Activated CD8-positive, alpha-beta T cell treated with anti-CD3 and anti-CD28 coated beads, Interleukin-2, amount 10 ng/mL, durations not matched to agents 7 days and 5 days (primary cell): ENCODE measurements at regions of chr10 and their contacts with region 1.

Region 1: DNA sequence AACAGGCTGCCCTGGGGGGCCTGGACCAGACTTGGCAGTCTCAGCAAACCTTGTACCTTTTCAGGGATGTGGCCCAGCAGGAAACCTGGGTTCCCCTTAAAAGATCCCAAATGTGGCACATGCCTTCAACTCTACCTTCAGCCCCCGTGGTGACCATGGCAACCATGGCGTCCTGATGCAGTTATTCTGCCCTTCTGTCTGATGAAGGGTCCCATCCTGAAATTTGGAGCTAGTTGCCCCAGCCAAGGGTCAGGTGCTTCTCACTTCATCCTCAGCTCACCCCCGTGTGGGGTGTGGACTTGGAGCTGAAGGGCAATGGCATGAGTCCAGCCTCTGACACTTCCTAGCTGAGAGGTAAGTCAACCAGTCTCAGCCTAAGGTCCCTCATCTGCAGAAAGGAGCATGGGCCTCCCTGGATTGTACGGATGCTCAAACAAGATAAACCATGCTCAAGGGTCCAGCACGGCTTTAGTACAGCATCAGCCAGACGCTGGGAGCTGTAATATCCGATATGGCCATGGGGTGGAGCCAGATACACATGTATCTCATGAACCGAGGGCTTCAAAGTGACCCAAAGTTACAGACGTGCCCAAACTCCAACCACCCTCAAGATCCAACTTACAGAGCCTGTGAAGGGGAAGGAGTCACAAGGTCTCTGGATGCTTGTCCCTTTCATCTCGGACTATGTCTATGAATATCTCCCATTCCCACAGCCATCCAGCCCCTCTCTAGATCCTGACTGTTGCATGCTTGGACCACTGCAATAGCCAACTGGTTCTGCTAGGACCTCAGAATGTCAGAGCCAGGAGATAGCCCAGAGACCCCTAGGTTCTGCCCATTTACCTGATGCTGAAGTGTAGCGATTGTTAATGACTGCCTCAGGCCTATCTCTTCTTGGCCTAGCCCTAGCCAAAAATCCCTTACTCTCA is 142.5 kb downstream of the SH3PXD2A start:
- DNase-seq: peak; percentile 88
- ATAC-seq: peak; percentile 86
- H3K4me3 Mint-ChIP-seq: no peak overlapping the region
- H3K27ac Mint-ChIP-seq: no peak overlapping the region
- H3K4me1 Mint-ChIP-seq: peaks cover 5% of the 10 kb centered on the region
- H3K27me3 Mint-ChIP-seq: peaks cover 3% of the 10 kb centered on the region

Region 2: GRCh38 chr10:103659674-103660363 is 53.0 kb before region 1 on chr10:
- CTCF ChIA-PET with region 1: no interaction called
- POLR2A ChIA-PET with region 1: no interaction called
- DNase-seq: peak; percentile 81
- ATAC-seq: peak; percentile 93
- H3K4me3 Mint-ChIP-seq: peak overlapping the region; percentile 89
- H3K27ac Mint-ChIP-seq: peak overlapping the region; percentile 89
- H3K4me1 Mint-ChIP-seq: peaks cover 19% of the 10 kb centered on the region
- H3K27me3 Mint-ChIP-seq: no peaks in the 10 kb centered on the region

Region 3: DNA sequence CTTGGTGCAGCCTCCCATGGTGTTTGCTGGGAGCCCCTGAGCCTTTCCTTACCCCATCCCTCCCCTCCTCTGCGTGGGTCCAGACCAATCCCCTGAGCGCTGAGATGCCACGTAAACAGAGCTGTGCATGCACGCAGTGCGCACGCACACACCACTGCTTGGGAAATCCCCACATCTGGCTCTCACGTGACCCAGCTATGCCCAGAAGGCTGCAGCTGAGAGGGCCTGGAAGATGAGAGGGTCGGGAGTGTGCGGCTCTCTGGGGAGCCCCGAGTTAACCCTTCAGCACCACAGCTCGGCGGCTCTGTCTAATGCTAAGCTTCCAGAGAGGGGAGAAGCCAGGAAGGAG is 34.7 kb before region 1 on chr10:
- CTCF ChIA-PET with region 1: no interaction called
- POLR2A ChIA-PET with region 1: no interaction called
- DNase-seq: peak; percentile 85
- ATAC-seq: peak; percentile 97
- H3K4me3 Mint-ChIP-seq: peak overlapping the region; percentile 75
- H3K27ac Mint-ChIP-seq: peak overlapping the region; percentile 88
- H3K4me1 Mint-ChIP-seq: peaks cover 13% of the 10 kb centered on the region
- H3K27me3 Mint-ChIP-seq: no peaks in the 10 kb centered on the region

Region 4: DNA sequence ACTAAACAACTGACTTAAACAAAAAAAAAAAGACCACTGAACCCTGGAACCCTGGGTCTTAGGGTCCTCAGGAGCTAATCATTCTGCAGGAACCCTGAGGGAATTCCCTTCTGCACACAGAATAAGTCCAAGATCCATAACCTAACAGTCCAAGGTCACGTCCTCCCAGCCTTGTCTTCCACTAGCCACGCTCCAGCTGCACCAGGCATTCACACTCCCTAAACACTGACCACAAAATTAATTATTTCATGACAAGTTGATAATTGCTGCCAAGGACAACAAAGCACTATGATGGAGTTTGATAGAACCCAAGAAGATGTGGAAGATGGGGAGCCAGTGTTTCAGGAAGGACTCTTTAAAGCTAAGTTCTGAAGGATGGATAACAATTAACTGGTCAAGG is 11.9 kb after region 1 on chr10:
- CTCF ChIA-PET with region 1: interaction called, 15 read pairs
- POLR2A ChIA-PET with region 1: no interaction called
- DNase-seq: no peak
- ATAC-seq: no peak
- H3K4me3 Mint-ChIP-seq: no peak overlapping the region
- H3K27ac Mint-ChIP-seq: no peak overlapping the region
- H3K4me1 Mint-ChIP-seq: no peaks in the 10 kb centered on the region
- H3K27me3 Mint-ChIP-seq: peaks cover 7% of the 10 kb centered on the region

Region 5: GRCh38 chr10:103845972-103846371 is 133.1 kb after region 1 on chr10:
- CTCF ChIA-PET with region 1: interaction called, 91 read pairs
- POLR2A ChIA-PET with region 1: interaction called, 3 read pairs
- DNase-seq: peak; percentile 62
- ATAC-seq: peak; percentile 88
- H3K4me3 Mint-ChIP-seq: peak overlapping the region; percentile 28
- H3K27ac Mint-ChIP-seq: peak overlapping the region; percentile 72
- H3K4me1 Mint-ChIP-seq: peaks cover 23% of the 10 kb centered on the region
- H3K27me3 Mint-ChIP-seq: peaks cover 15% of the 10 kb centered on the region

Region 6: DNA sequence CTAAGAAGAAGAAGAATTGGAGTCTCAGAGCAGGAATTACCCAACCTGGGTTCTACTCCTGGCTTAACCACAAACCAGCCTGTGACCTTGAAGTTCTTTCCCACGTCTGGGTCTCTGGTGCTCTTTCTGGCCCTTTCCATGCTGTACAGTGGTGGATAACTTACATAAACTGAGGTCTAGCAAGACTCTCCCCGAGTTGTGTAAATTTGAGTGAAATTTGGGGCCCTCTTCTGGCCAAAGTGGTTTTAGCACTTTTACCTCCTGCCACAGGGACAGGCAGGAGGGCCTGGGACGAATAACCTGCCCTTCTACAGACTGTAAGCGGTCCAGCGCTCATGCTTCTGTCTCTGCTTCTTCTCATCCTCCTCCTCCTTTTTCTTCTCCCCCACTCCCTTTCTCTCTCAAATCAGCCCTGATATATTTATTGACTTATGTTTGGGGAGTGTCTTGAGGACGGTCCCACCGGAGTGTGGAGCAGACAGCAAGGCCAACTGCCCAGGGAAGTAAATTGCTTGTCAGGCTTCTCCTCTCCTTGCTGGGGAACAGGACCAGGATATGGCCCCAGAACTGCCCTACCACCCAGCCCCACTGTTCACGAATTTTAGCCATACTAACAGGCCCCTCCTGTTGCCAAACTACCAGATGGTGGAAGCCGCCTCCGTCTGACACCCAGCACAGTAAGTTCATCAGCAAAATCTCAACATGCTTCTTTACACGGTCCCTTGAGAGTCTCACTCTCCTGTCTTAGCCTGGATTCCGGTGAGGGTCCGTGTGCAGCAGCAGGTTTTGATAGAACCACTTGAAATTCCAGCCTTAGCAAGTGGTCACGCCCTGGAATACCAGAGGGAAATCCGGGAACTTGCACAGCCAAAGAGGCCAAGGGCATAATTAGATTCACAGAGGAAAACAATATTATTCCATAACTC is 146.6 kb after region 1 on chr10:
- CTCF ChIA-PET with region 1: interaction called, 91 read pairs
- POLR2A ChIA-PET with region 1: no interaction called
- DNase-seq: peak; percentile 76
- ATAC-seq: peak; percentile 67
- H3K4me3 Mint-ChIP-seq: no peak overlapping the region
- H3K27ac Mint-ChIP-seq: peak overlapping the region; percentile 31
- H3K4me1 Mint-ChIP-seq: peaks cover 4% of the 10 kb centered on the region
- H3K27me3 Mint-ChIP-seq: peaks cover 32% of the 10 kb centered on the region

Region 7: GRCh38 chr10:103874730-103875129 is 161.9 kb after region 1 on chr10:
- CTCF ChIA-PET with region 1: interaction called, 10 read pairs
- POLR2A ChIA-PET with region 1: no interaction called
- DNase-seq: no peak
- ATAC-seq: no peak
- H3K4me3 Mint-ChIP-seq: no peak overlapping the region
- H3K27ac Mint-ChIP-seq: no peak overlapping the region
- H3K4me1 Mint-ChIP-seq: no peaks in the 10 kb centered on the region
- H3K27me3 Mint-ChIP-seq: no peaks in the 10 kb centered on the region